Gastrocnemius medialis (tissue), 4 donors: ENCODE measurements at regions of chrX and their contacts with region 1.

Region 1: GRCh38 chrX:72018277-72019112 is 107.8 kb downstream of the NHSL2 start:
- DNase-seq: peak; percentile 70 to 86
- ATAC-seq: peak; percentile 94
- H3K4me3 ChIP-seq: peak overlapping the region in 3 of 4 donors; percentile 24 to 47 (median 46)
- H3K27ac ChIP-seq: peak overlapping the region; percentile 42 to 74 (median 66)
- H3K4me1 ChIP-seq: no peaks in the 10 kb centered on the region
- H3K27me3 ChIP-seq: peaks cover 0 to 6% (median 0%) of the 10 kb centered on the region in 3 donors
- CTCF ChIP-seq: peak; percentile 32 to 91 (median 74)
- POLR2A ChIP-seq: no peak

Region 2: DNA sequence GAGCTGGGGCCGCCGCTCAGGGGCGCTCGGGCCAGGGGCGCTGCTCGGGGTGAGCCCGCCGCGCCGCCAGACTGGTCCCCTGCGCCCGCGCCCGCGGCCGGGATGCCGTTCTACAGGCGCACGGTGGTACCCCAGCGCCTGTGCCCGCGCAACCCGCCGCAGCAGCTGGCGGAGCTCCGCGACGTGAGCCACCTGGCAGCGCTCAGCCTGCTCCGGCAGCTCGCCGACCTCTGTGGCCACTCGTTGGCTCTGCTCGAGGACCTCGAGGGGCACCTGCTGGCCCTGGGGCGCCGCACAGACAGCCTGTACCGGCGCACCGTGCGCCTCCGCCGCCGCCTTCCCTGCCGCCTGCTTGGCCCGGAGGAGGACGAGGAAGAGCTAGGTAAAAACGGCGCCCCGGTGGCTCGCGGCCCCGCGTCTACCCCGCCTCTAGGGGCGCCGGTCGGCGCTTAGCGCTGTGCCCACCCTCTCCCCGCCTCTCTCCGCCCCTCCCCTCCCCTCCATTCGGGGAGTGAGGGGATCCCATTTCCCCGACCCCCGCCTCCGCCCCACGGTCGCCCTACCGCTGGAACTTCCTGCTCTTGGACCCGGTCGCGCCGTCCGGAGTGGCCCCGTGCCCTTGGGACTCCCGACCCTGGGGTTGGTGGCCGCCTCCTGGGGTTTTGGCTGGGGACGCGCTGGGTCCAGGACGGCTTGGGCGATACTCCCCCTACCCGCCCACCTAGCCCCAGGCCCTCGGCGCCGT is 107.3 kb before region 1 on chrX:
- in situ Hi-C with region 1: no loop called
- intact Hi-C with region 1: loop called (anchors 10 kb)
- DNase-seq: no peak
- ATAC-seq: peak in 1 of 2 donors; percentile 36
- H3K4me3 ChIP-seq: peak overlapping the region; percentile 36 to 51 (median 46)
- H3K27ac ChIP-seq: peak overlapping the region in 2 of 4 donors; percentile 18 to 25
- H3K4me1 ChIP-seq: peaks cover 0 to 3% of the 10 kb centered on the region in 2 donors
- H3K27me3 ChIP-seq: peaks cover 0 to 27% (median 8%) of the 10 kb centered on the region in 3 donors
- CTCF ChIP-seq: peak in 2 of 5 experiments; percentile 10 to 40
- POLR2A ChIP-seq: no peak

Region 3: GRCh38 chrX:71976753-71977152 is 41.7 kb before region 1 on chrX:
- in situ Hi-C with region 1: no loop called
- intact Hi-C with region 1: loop called (anchors 1 kb)
- DNase-seq: peak; percentile 17 to 77
- ATAC-seq: peak; percentile 95 to 97
- H3K4me3 ChIP-seq: no peak overlapping the region
- H3K27ac ChIP-seq: peak overlapping the region; percentile 31 to 70 (median 52)
- H3K4me1 ChIP-seq: no peaks in the 10 kb centered on the region
- H3K27me3 ChIP-seq: no peaks in the 10 kb centered on the region
- CTCF ChIP-seq: no peak
- POLR2A ChIP-seq: no peak

Region 4: DNA sequence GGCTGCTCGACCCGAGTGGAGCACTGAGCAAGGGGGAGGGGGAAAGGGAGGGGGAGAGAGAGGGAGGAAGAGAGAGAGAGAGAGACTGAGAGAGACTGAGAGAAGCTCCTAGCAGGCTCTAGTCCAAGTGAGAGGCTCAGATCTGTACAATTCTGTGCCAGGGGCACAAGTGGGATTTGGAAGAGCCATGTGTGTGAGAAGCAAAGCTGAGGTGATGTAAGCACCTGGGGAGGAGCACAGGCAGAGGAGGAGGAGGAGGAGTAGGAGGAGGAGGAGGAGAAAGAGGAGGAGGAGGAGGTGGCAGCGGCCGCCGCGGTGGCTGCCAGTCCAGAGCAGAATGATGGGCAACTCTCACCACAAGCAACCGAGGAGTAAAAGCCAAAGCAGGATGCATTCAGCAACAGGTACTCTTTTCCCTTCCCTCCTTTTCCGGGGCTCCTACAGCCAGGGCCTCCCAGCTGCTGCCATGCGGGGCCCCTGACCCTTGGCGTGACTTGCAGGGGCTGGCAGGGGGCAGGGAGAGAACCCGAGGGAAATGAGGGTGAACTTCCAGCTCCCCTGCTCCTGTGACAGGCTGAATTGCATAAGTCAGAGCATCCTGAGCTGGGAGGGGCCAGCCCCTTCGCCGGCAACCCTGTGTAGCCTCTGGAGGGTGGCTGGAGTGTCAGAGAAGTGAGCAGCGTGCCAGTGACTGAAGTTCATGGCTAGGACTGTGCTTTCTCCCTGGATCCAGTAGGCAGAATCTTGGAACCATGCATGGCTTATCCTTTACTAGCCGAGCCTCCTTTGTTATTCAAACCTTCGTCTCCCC is 51.1 kb after region 1 on chrX:
- in situ Hi-C with region 1: no loop called
- intact Hi-C with region 1: no loop called
- DNase-seq: no peak
- ATAC-seq: no peak
- H3K4me3 ChIP-seq: peak overlapping the region in 1 of 4 donors; percentile 4
- H3K27ac ChIP-seq: no peak overlapping the region
- H3K4me1 ChIP-seq: no peaks in the 10 kb centered on the region
- H3K27me3 ChIP-seq: peaks cover 0 to 11% (median 5%) of the 10 kb centered on the region in 3 donors
- CTCF ChIP-seq: no peak
- POLR2A ChIP-seq: no peak

Region 5: DNA sequence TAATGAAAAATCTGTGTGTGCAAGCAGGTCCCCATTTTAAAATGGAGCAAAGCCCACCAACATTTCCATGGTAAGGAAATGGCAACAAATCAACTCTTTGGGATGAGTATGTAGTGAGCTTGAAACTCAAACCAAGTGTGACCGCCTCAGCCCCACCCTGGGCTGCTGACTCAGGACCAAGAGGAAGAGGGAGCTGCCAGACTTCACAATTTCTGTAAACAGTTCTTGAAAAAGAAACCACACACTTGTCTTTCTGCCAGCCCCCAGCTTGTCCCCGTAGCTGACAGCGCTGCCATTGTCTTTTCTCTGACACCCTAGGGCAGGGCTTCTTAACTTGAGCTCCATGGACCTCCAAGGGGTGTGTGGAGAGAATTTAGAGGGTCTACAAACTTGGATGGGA is 102.9 kb after region 1 on chrX:
- in situ Hi-C with region 1: loop called in 3 of 4 experiments (anchors 5 to 10 kb)
- intact Hi-C with region 1: loop called (anchors 1 kb)
- DNase-seq: peak; percentile 20 to 58
- ATAC-seq: peak in 1 of 2 donors; percentile 77
- H3K4me3 ChIP-seq: no peak overlapping the region
- H3K27ac ChIP-seq: peak overlapping the region; percentile 5 to 65 (median 46)
- H3K4me1 ChIP-seq: peaks cover 3 to 7% of the 10 kb centered on the region in 2 donors
- H3K27me3 ChIP-seq: no peaks in the 10 kb centered on the region
- CTCF ChIP-seq: no peak
- POLR2A ChIP-seq: no peak